B cell (primary cell): ENCODE measurements at regions of chr7 and their contacts with region 1.

Region 1: DNA sequence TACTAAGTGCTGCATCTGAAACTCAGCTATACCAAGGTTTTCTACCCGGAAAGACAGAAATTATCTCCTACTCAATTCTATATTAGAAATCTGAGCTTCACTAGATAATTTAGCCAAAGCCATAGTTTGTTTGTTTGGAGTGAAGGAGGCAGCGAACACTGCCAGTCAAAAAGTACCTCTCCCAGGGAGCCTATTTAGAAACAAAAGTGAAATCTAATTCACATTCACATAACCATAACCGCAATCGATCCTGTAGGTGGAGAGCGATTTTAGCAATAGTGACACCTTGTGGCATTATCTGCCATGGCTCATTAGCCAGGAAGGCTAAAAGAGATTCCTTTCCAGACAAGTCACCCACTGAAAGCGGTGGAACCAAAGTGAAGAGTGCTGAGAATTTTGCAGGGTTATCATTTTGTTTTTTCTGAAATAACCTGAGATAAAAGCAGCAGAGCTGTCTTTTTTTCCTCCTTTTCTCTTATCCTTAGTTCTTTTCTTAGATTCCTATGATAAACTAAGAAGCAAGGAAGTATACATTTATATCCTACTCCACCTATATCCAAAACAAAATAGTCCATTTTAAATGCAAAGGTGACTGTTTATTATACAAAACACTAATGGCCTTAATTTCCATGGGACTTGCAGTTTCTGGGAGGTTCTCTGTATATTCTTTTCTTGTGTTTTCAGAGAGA is 83.7 kb upstream of the BET1 start:
- DNase-seq: peak; percentile 85
- ATAC-seq: peak; percentile 83
- H3K4me3 ChIP-seq: peak overlapping the region; percentile 11 to 66 (median 42)
- H3K4me3 Mint-ChIP-seq: peak overlapping the region; percentile 78
- H3K27ac ChIP-seq: peak overlapping the region; percentile 28 to 51
- H3K27ac Mint-ChIP-seq: peak overlapping the region; percentile 79
- H3K4me1 ChIP-seq: peaks cover 14% of the 10 kb centered on the region in 2 donors
- H3K4me1 Mint-ChIP-seq: peaks cover 17% of the 10 kb centered on the region
- H3K27me3 ChIP-seq: no peaks in the 10 kb centered on the region
- H3K27me3 Mint-ChIP-seq: no peaks in the 10 kb centered on the region
- CTCF ChIP-seq: peak; percentile 87

Region 2: GRCh38 chr7:93601363-93601762 is 486.4 kb before region 1 on chr7:
- CTCF ChIA-PET with region 1: no interaction called
- POLR2A ChIA-PET with region 1: no interaction called
- intact Hi-C with region 1: no loop called
- DNase-seq: no peak
- ATAC-seq: no peak
- H3K4me3 ChIP-seq: no peak overlapping the region
- H3K4me3 Mint-ChIP-seq: no peak overlapping the region
- H3K27ac ChIP-seq: no peak overlapping the region
- H3K27ac Mint-ChIP-seq: no peak overlapping the region
- H3K4me1 ChIP-seq: no peaks in the 10 kb centered on the region
- H3K4me1 Mint-ChIP-seq: no peaks in the 10 kb centered on the region
- H3K27me3 ChIP-seq: no peaks in the 10 kb centered on the region
- H3K27me3 Mint-ChIP-seq: peaks cover 8% of the 10 kb centered on the region
- CTCF ChIP-seq: no peak

Region 3: DNA sequence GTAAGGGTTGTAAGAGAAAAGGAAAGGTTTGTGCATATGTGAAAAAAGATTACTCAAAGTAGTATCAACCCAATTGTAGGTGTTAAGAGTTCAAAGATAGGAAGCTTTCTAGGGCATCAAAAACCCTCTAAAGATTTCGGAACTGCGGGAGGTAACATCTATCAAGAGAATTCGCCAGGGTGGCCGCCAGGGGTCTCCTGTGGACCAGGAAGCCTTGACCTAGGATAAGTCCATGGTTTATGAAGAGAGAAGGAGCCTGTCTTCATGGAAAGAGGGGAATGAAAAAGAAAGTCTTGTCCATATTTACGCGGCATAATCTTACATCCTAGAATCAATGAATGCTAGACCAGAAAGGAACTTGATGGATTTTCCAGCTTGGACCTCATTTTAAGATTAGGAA is 372.6 kb before region 1 on chr7:
- CTCF ChIA-PET with region 1: interaction called, 6 read pairs
- POLR2A ChIA-PET with region 1: no interaction called
- intact Hi-C with region 1: loop called (anchors 2 kb)
- DNase-seq: peak; percentile 40
- ATAC-seq: no peak
- H3K4me3 ChIP-seq: no peak overlapping the region
- H3K4me3 Mint-ChIP-seq: no peak overlapping the region
- H3K27ac ChIP-seq: no peak overlapping the region
- H3K27ac Mint-ChIP-seq: no peak overlapping the region
- H3K4me1 ChIP-seq: no peaks in the 10 kb centered on the region
- H3K4me1 Mint-ChIP-seq: no peaks in the 10 kb centered on the region
- H3K27me3 ChIP-seq: peaks cover 0 to 9% (median 0%) of the 10 kb centered on the region in 4 experiments
- H3K27me3 Mint-ChIP-seq: peaks cover 28% of the 10 kb centered on the region
- CTCF ChIP-seq: peak; percentile 46

Region 4: DNA sequence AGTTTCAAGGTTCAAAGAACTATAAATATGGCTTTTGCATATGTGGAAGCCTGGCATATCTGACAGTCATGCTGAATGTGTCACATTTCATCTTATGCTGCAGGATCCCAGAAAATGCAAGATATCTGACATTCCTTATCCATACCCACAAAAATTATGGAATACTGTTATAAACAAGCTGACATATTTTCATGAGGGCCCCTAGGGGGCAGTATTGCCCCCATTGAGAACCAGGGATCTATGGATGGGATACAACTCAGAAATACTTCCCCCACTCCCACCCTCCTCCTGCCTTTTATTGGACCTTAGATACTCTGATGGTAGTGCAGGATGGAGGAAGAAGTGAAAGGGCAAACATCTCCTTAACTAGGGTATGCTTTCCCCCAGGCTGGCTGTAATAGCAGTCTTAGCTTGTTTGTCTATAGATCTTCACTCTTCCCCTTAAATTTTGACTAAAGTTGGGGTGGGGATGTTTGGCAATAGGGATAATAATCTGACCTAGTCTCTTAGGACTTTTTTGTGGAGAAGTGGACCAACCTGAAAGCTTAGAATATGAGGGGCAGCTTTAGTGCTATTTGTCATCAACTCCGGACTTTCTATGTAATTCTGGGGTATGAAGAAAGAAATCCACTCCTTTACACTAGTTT is 184.9 kb before region 1 on chr7:
- CTCF ChIA-PET with region 1: interaction called, 190 read pairs
- POLR2A ChIA-PET with region 1: no interaction called
- intact Hi-C with region 1: loop called (anchors 1 kb)
- DNase-seq: peak; percentile 66
- ATAC-seq: peak; percentile 41
- H3K4me3 ChIP-seq: no peak overlapping the region
- H3K4me3 Mint-ChIP-seq: no peak overlapping the region
- H3K27ac ChIP-seq: no peak overlapping the region
- H3K27ac Mint-ChIP-seq: no peak overlapping the region
- H3K4me1 ChIP-seq: no peaks in the 10 kb centered on the region
- H3K4me1 Mint-ChIP-seq: no peaks in the 10 kb centered on the region
- H3K27me3 ChIP-seq: no peaks in the 10 kb centered on the region
- H3K27me3 Mint-ChIP-seq: peaks cover 25% of the 10 kb centered on the region
- CTCF ChIP-seq: peak; percentile 80

Region 5: DNA sequence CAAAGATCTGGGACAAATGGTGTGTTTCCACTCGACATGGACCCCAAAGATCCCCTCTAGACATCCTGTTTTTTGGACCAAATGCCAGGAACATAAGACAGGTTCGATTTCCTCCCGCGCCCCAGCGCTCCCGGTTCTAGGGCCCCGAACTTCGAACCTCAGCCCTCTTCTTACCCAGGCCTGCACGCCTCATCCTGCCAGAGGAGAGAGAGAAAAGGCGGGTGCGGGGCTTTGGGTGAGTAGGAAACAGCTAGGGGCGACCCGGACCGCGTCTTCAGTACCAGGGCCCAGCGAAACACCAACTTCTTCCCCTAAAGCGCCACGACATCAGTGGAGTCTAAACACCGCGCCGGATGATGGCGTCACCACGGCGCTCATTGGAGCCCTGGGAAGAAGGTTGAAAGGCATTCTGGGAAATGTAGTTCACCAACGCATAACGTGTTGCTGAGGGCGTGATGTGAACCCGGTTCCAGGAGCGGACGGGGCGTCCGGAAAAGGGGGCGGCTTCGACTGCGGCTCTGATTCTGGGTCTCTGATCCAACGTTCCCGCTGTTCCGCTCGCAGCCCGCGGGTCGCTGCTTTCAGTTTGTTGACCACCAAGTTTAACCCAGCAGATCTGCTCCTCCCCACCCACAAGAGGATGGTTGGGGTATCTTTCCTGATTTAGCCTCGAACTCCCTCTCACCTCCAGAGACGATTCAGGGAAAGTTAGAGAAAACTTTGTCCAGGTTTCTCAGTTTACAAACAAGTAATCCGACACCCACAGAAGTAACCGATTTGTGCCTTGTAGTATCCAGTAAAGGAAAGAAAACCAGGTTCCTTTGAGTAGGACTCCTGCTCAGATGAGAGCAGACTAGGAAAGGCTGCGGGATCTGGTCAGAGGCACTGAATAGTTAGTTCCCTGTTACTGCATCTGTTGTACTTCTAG is 83.5 kb before region 1 on chr7 and contains the start of gene BET1:
- CTCF ChIA-PET with region 1: interaction called, 7 read pairs
- POLR2A ChIA-PET with region 1: interaction called, 3 read pairs
- intact Hi-C with region 1: loop called (anchors 1 kb)
- DNase-seq: peak; percentile 97
- ATAC-seq: peak; percentile 94
- H3K4me3 ChIP-seq: peak within 1 kb of the TSS; percentile 78 to 98 (median 96)
- H3K4me3 Mint-ChIP-seq: peak within 1 kb of the TSS; percentile 99
- H3K27ac ChIP-seq: peak within 1 kb of the TSS; percentile 80 to 89
- H3K27ac Mint-ChIP-seq: peak within 1 kb of the TSS; percentile 98
- H3K4me1 ChIP-seq: peaks cover 16% of the 10 kb centered on the region in 2 donors
- H3K4me1 Mint-ChIP-seq: peaks cover 47% of the 10 kb centered on the region
- H3K27me3 ChIP-seq: peaks cover 0 to 5% (median 0%) of the 10 kb centered on the region in 4 experiments
- H3K27me3 Mint-ChIP-seq: no peaks in the 10 kb centered on the region
- CTCF ChIP-seq: no peak
- total RNA-seq, gene BET1: 36.1 and 40.7 TPM in 2 replicates

Region 6: GRCh38 chr7:94069162-94069739 is 18.6 kb before region 1 on chr7:
- CTCF ChIA-PET with region 1: interaction called, 10 read pairs
- POLR2A ChIA-PET with region 1: no interaction called
- intact Hi-C with region 1: no loop called
- DNase-seq: no peak
- ATAC-seq: peak; percentile 69
- H3K4me3 ChIP-seq: peak overlapping the region in 1 of 5 experiments; percentile 13
- H3K4me3 Mint-ChIP-seq: peak overlapping the region; percentile 56
- H3K27ac ChIP-seq: no peak overlapping the region
- H3K27ac Mint-ChIP-seq: peak overlapping the region; percentile 41
- H3K4me1 ChIP-seq: peaks cover 22 to 31% of the 10 kb centered on the region in 2 donors
- H3K4me1 Mint-ChIP-seq: peaks cover 36% of the 10 kb centered on the region
- H3K27me3 ChIP-seq: no peaks in the 10 kb centered on the region
- H3K27me3 Mint-ChIP-seq: no peaks in the 10 kb centered on the region
- CTCF ChIP-seq: no peak

Region 7: GRCh38 chr7:94276795-94277194 is 189.0 kb after region 1 on chr7:
- CTCF ChIA-PET with region 1: interaction called, 6 read pairs
- POLR2A ChIA-PET with region 1: no interaction called
- intact Hi-C with region 1: loop called (anchors 2 kb)
- DNase-seq: peak; percentile 46
- ATAC-seq: peak; percentile 66
- H3K4me3 ChIP-seq: no peak overlapping the region
- H3K4me3 Mint-ChIP-seq: no peak overlapping the region
- H3K27ac ChIP-seq: no peak overlapping the region
- H3K27ac Mint-ChIP-seq: no peak overlapping the region
- H3K4me1 ChIP-seq: no peaks in the 10 kb centered on the region
- H3K4me1 Mint-ChIP-seq: no peaks in the 10 kb centered on the region
- H3K27me3 ChIP-seq: peaks cover 0 to 3% (median 0%) of the 10 kb centered on the region in 4 experiments
- H3K27me3 Mint-ChIP-seq: peaks cover 9% of the 10 kb centered on the region
- CTCF ChIP-seq: peak; percentile 58

Region 8: GRCh38 chr7:94368371-94368791 is 280.6 kb after region 1 on chr7:
- CTCF ChIA-PET with region 1: no interaction called
- POLR2A ChIA-PET with region 1: no interaction called
- intact Hi-C with region 1: no loop called
- DNase-seq: no peak
- ATAC-seq: no peak
- H3K4me3 ChIP-seq: no peak overlapping the region
- H3K4me3 Mint-ChIP-seq: no peak overlapping the region
- H3K27ac ChIP-seq: no peak overlapping the region
- H3K27ac Mint-ChIP-seq: no peak overlapping the region
- H3K4me1 ChIP-seq: no peaks in the 10 kb centered on the region
- H3K4me1 Mint-ChIP-seq: no peaks in the 10 kb centered on the region
- H3K27me3 ChIP-seq: no peaks in the 10 kb centered on the region
- H3K27me3 Mint-ChIP-seq: peaks cover 20% of the 10 kb centered on the region
- CTCF ChIP-seq: no peak